ENCODE measurements at regions of chr13 and their contacts with region 1.

Region 1: DNA sequence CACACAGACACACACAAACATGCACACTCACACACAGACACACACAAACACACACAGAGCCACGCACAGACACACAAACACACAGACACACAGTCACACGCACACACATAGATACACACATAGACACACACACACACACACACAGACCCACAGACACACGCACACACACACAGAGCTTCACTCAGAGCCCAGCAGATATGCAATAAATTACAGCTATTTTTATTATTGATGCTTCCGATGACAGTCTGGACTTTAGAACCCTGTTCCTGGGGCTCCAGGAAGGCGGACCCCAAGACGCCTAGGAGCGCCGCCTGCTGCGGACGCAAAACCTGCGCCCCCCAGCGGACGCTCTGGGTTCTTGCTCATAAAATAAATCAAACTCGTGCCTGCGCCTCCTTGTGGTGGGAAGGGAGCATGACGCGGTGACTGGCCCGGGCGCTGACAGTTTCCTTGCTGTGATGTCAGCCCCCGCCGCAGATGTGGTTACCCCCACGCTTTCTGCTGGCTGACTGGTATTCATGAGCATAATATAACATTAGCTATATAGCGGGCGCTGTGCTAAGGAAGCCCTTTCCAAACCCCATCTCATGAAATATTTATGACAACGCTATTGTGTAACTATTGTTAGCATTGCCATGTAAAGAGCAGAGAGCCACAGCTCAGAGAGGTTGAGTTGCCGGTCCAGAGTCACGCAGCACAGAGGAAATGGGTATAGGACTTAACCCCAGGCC is 64.4 kb upstream of the TM9SF2 start:
- DNase-seq: peak; percentile 98
- H3K4me3 Mint-ChIP-seq: peak overlapping the region; percentile 21
- H3K27ac Mint-ChIP-seq: peak overlapping the region; percentile 23
- H3K4me1 Mint-ChIP-seq: peaks cover 55% of the 10 kb centered on the region
- H3K27me3 Mint-ChIP-seq: no peaks in the 10 kb centered on the region

Region 2: DNA sequence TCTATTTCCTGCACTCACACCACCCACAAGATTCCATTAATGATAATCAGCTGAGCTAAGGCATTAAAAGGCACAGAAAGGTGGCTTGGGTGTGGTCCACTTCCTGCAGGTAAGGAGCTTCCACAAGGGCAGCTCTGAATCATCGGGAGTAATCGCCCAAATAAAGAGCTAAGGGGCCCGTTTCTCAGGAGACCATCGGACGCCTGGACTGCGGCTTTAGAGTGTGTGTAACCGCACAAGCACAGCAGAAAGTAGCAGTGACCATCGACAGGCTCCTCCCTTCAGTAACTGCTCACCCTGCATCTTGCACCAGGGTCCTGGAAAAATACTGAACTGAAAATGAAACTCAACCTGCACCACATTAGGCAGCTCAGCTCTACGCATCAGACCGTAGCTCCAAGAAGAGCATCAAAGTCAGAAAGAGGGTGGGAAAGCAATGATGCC is 865.9 kb before region 1 on chr13:
- CTCF ChIA-PET with region 1: no interaction called
- intact Hi-C with region 1: loop called (anchors 5 kb)
- DNase-seq: peak; percentile 62
- H3K4me3 Mint-ChIP-seq: peak overlapping the region; percentile 76
- H3K27ac Mint-ChIP-seq: peak overlapping the region; percentile 80
- H3K4me1 Mint-ChIP-seq: peaks cover 86% of the 10 kb centered on the region
- H3K27me3 Mint-ChIP-seq: no peaks in the 10 kb centered on the region

Region 3: DNA sequence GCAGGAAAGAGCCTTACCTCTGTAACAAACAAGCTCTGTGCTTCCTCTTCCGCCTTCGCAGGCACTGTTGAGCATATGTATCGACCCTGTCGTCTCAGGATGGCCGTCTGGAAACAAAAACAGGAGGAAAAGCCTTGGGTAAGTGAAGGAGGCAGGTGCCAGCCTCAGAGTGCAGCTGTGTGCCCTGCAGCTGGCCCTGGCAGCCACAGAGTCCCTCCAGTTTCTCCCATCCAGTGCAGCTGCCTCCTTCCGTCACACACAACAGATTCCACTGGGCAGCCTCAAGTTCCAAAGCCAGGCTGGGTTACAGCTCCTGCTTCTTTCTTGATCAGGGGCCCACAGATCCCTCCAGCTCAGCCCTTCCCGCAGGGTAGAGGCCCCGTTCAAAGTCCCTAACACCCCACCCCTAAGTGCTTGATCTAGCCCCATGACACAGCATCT is 506.7 kb before region 1 on chr13:
- CTCF ChIA-PET with region 1: no interaction called
- intact Hi-C with region 1: no loop called
- DNase-seq: peak; percentile 42
- H3K4me3 Mint-ChIP-seq: peak overlapping the region; percentile 71
- H3K27ac Mint-ChIP-seq: peak overlapping the region; percentile 84
- H3K4me1 Mint-ChIP-seq: peaks cover 23% of the 10 kb centered on the region
- H3K27me3 Mint-ChIP-seq: no peaks in the 10 kb centered on the region

Region 4: GRCh38 chr13:99022941-99023340 is 413.9 kb before region 1 on chr13:
- CTCF ChIA-PET with region 1: no interaction called
- intact Hi-C with region 1: no loop called
- DNase-seq: no peak
- H3K4me3 Mint-ChIP-seq: no peak overlapping the region
- H3K27ac Mint-ChIP-seq: no peak overlapping the region
- H3K4me1 Mint-ChIP-seq: peaks cover 79% of the 10 kb centered on the region
- H3K27me3 Mint-ChIP-seq: no peaks in the 10 kb centered on the region

Region 5: GRCh38 chr13:99176309-99177276 is 260.3 kb before region 1 on chr13:
- CTCF ChIA-PET with region 1: interaction called, 55 read pairs
- intact Hi-C with region 1: loop called (anchors 1 kb)
- DNase-seq: peak; percentile 87
- H3K4me3 Mint-ChIP-seq: peak overlapping the region; percentile 48
- H3K27ac Mint-ChIP-seq: no peak overlapping the region
- H3K4me1 Mint-ChIP-seq: peaks cover 35% of the 10 kb centered on the region
- H3K27me3 Mint-ChIP-seq: no peaks in the 10 kb centered on the region

Region 6: GRCh38 chr13:99288089-99288488 is 148.8 kb before region 1 on chr13:
- CTCF ChIA-PET with region 1: interaction called, 13 read pairs
- intact Hi-C with region 1: loop called (anchors 1 kb)
- DNase-seq: peak; percentile 89
- H3K4me3 Mint-ChIP-seq: peak overlapping the region; percentile 37
- H3K27ac Mint-ChIP-seq: peak overlapping the region; percentile 89
- H3K4me1 Mint-ChIP-seq: peaks cover 80% of the 10 kb centered on the region
- H3K27me3 Mint-ChIP-seq: no peaks in the 10 kb centered on the region

Region 7: GRCh38 chr13:99322297-99323103 is 114.4 kb before region 1 on chr13:
- CTCF ChIA-PET with region 1: interaction called, 10 read pairs
- intact Hi-C with region 1: loop called (anchors 1 kb)
- DNase-seq: peak; percentile 63
- H3K4me3 Mint-ChIP-seq: peak overlapping the region; percentile 56
- H3K27ac Mint-ChIP-seq: peak overlapping the region; percentile 87
- H3K4me1 Mint-ChIP-seq: peaks cover 75% of the 10 kb centered on the region
- H3K27me3 Mint-ChIP-seq: no peaks in the 10 kb centered on the region

Region 8: DNA sequence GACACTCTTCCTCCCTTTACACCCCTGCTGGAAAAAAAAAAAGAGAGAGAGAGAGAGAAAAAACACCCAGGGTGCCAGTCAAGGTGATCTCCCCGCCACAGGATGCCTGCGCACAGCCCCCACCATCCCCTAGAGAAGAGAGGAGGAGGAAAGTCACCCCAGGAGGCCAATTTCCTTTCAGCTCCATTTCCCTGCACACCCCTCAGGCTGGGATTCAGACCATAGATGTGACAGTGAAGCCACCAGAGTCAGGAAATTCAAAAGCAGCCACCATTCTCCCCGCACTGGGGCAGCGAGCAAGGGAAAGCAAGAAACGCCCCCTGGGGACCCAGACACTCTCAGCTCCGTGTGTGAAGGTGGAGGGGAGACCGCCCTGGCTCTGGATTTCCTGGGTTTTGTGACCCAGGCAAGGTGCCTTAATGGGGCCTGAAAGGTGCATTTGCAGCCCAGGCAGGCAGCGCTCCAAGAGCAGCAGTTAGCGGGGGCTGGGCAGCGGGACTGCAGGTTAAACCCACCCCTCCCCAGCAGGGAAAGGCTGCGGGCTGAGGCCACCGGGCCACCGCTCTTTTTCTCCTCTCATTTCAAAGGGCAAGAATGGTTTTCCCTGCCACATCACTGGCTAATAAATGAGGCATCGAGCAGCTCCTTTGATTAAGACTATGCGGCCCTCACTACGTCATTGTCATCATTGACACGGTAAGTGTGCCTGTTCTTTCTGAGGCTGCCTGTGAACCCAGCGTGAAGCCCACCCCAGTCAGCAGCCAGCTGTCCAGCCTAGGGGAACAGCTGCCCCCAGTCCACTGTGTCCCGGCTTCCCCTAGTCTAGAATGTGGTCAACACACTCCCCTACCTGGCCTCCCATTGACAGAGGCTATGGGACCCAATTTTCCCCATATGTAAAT is 19.4 kb before region 1 on chr13:
- CTCF ChIA-PET with region 1: interaction called, 118 read pairs
- intact Hi-C with region 1: loop called (anchors 1 kb)
- DNase-seq: peak; percentile 71
- H3K4me3 Mint-ChIP-seq: no peak overlapping the region
- H3K27ac Mint-ChIP-seq: no peak overlapping the region
- H3K4me1 Mint-ChIP-seq: peaks cover 64% of the 10 kb centered on the region
- H3K27me3 Mint-ChIP-seq: peaks cover 2% of the 10 kb centered on the region

Measured in activated naive CD4-positive, alpha-beta T cell treated with anti-CD3 and anti-CD28 coated beads for 36 hours (primary cell).